Naive thymus-derived CD4-positive, alpha-beta T cell (primary cell): ENCODE measurements at regions of chr7 and their contacts with region 1.

Region 1: GRCh38 chr7:104983578-104984539 is 30.1 kb upstream of the KMT2E start:
- DNase-seq: peak; percentile 78 to 86 (median 84)
- ATAC-seq: peak; percentile 94
- H3K4me3 ChIP-seq: peak overlapping the region; percentile 93
- H3K4me3 Mint-ChIP-seq: peak overlapping the region; percentile 93 to 100 (median 99)
- H3K27ac ChIP-seq: peak overlapping the region; percentile 98
- H3K27ac Mint-ChIP-seq: peak overlapping the region; percentile 98 to 100 (median 100)
- H3K4me1 ChIP-seq: peaks cover 19 to 23% of the 10 kb centered on the region in 2 donors
- H3K4me1 Mint-ChIP-seq: peaks cover 27 to 67% (median 55%) of the 10 kb centered on the region in 7 donors
- H3K27me3 ChIP-seq: no peaks in the 10 kb centered on the region
- H3K27me3 Mint-ChIP-seq: no peaks in the 10 kb centered on the region

Region 2: DNA sequence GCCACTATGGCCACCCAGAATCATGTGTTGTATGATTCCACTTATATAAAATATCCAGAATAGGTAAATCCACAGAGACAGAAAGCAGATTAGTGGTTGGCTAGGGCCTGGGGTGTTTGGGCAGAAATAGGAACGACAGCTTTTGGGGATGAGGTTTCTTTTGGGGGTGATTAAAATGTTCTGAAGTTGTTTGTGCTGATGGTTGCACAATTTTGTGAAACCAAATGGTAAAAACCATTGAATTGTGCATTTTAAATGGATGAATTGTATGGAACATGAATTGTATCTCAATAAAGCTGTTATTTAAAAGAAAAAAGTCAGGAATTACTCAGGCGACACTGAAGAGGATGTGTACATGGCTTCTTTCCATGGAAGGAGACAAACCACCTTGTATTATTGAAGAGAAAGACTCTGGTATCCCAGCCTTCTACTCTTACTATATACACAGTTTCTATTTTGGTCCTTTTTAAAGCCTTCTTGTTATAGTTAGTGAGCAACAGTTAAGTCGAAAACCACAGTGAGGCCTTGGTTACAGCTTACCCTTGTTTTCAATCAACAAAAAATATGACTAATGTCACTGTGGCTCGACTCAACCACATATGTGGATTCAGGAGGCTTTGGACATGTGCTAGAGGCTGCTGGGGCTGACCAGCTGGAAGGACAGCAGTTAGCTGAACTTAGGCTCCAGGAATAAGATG is 27.0 kb before region 1 on chr7:
- CTCF ChIA-PET with region 1: interaction called, 3 read pairs
- POLR2A ChIA-PET with region 1: no interaction called
- intact Hi-C with region 1: loop called in 1 of 2 experiments (anchors 1 kb)
- DNase-seq: peak in 1 of 9 donors; percentile 61
- ATAC-seq: peak; percentile 80
- H3K4me3 ChIP-seq: no peak overlapping the region
- H3K4me3 Mint-ChIP-seq: peak overlapping the region in 1 of 10 donors; percentile 59
- H3K27ac ChIP-seq: no peak overlapping the region
- H3K27ac Mint-ChIP-seq: peak overlapping the region in 5 of 9 donors; percentile 38 to 99 (median 60)
- H3K4me1 ChIP-seq: peaks cover 0 to 19% of the 10 kb centered on the region in 2 donors
- H3K4me1 Mint-ChIP-seq: peaks cover 4 to 61% (median 6%) of the 10 kb centered on the region in 7 donors
- H3K27me3 ChIP-seq: no peaks in the 10 kb centered on the region
- H3K27me3 Mint-ChIP-seq: no peaks in the 10 kb centered on the region

Region 3: DNA sequence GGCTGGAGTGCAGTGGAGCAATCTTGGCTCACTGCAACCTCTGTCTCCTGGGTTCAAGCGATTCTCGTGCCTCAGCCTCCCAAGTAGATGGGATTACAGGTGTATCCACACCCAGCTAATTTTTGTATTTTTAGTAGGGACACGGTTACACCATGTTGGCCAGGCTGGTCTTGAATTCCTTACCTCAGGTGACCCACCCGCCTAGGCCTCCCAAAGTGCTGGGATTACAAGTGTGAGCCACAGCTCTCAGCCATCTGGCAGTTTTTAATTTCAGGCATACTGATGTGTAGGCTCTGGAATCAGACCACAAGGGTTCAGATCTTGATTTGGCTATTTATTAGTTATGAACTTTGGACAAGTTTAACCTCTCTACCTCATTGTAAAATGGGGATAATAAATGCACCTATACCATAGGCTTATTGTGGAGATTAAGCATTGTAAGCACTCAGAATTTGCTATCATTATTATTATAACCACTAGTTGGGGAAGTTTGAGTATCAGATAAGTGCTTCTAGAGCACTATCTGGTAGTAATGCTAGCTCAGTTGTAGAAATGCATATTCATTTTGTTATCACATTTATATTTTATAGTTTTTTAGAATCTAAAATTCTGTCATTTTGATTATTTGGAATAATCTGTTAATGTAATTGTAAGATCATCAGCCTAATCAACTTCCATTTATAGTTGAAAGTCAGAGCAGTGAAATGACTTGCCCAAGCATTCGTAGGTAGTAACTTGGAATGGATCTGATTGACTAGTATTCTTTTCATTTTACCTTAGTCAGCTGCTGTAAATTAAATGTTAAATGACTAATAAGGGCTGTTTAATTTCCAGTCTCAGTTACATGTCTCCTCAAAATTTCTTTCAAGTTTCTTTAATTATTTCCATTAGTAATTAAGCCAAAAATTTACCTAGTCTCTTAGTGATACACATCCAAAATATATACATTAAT is 52.6 kb after region 1 on chr7:
- CTCF ChIA-PET with region 1: interaction called, 76 read pairs
- POLR2A ChIA-PET with region 1: interaction called, 13 read pairs
- intact Hi-C with region 1: loop called (anchors 1 kb)
- DNase-seq: no peak
- ATAC-seq: peak; percentile 19
- H3K4me3 ChIP-seq: no peak overlapping the region
- H3K4me3 Mint-ChIP-seq: peak overlapping the region in 8 of 10 donors; percentile 6 to 74 (median 44)
- H3K27ac ChIP-seq: no peak overlapping the region
- H3K27ac Mint-ChIP-seq: peak overlapping the region in 7 of 9 donors; percentile 18 to 70 (median 41)
- H3K4me1 ChIP-seq: peaks cover 31 to 35% of the 10 kb centered on the region in 2 donors
- H3K4me1 Mint-ChIP-seq: peaks cover 29 to 77% (median 63%) of the 10 kb centered on the region in 7 donors
- H3K27me3 ChIP-seq: no peaks in the 10 kb centered on the region
- H3K27me3 Mint-ChIP-seq: no peaks in the 10 kb centered on the region

Region 4: GRCh38 chr7:105105579-105105978 is 121.7 kb after region 1 on chr7:
- CTCF ChIA-PET with region 1: interaction called, 3 read pairs
- POLR2A ChIA-PET with region 1: interaction called, 3 read pairs
- intact Hi-C with region 1: loop called in 1 of 2 experiments (anchors 1 kb)
- DNase-seq: no peak
- ATAC-seq: no peak
- H3K4me3 ChIP-seq: no peak overlapping the region
- H3K4me3 Mint-ChIP-seq: no peak overlapping the region
- H3K27ac ChIP-seq: no peak overlapping the region
- H3K27ac Mint-ChIP-seq: peak overlapping the region in 4 of 9 donors; percentile 32 to 64 (median 44)
- H3K4me1 ChIP-seq: no peaks in the 10 kb centered on the region
- H3K4me1 Mint-ChIP-seq: peaks cover 0 to 23% (median 15%) of the 10 kb centered on the region in 7 donors
- H3K27me3 ChIP-seq: no peaks in the 10 kb centered on the region
- H3K27me3 Mint-ChIP-seq: no peaks in the 10 kb centered on the region

Region 5: GRCh38 chr7:105352018-105352612 is 368.3 kb after region 1 on chr7:
- CTCF ChIA-PET with region 1: no interaction called
- POLR2A ChIA-PET with region 1: interaction called, 3 read pairs
- intact Hi-C with region 1: loop called in 1 of 2 experiments (anchors 1 kb)
- DNase-seq: peak; percentile 22 to 88 (median 82)
- ATAC-seq: peak; percentile 99
- H3K4me3 ChIP-seq: peak overlapping the region; percentile 44
- H3K4me3 Mint-ChIP-seq: peak overlapping the region; percentile 74 to 89 (median 81)
- H3K27ac ChIP-seq: peak overlapping the region; percentile 48
- H3K27ac Mint-ChIP-seq: peak overlapping the region; percentile 73 to 98 (median 92)
- H3K4me1 ChIP-seq: peaks cover 62 to 67% of the 10 kb centered on the region in 2 donors
- H3K4me1 Mint-ChIP-seq: peaks cover 45 to 82% (median 66%) of the 10 kb centered on the region in 7 donors
- H3K27me3 ChIP-seq: no peaks in the 10 kb centered on the region
- H3K27me3 Mint-ChIP-seq: no peaks in the 10 kb centered on the region

Region 6: DNA sequence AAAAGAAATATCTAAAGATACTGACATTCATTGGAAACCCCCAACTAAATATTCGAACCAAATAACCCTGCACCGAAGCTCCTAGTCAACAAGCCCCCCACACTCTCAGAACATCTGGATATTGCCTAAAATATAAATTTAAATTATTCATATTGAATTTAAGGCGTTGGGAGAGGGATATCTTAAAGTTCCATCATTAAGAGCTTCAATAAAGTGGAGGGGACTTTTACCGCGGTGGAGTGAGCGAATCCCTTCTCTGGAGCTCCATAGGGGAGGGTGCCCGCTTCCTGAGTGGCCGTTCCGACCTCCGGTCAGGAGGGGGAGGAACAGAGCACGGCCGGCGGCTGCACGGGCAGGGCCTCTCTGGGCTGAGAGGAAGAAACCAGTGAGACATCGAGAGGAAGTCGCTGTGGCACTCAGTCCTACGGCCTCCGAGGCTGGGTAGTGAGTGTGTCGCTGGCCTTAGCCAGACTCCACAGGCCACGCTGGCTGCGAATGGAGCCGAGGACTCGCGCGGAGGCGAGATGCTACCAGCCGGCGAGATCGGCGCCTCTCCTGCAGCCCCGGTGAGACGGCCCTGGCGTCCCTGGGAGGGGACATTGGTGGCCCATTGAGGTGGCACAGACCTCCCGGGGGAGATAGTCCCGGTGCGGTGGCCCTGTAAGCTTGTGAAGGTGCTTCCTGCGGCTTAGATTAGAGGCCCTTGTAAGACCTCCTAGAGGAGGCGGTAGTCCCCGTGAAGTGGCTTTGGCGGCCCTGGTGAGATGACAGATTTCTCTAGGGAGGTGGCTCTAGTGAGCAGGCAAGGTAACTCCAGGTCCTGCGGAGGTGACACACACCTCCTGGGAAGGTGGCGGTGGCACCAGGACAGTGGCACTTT is 548.2 kb after region 1 on chr7 and contains the start of gene RINT1:
- CTCF ChIA-PET with region 1: no interaction called
- POLR2A ChIA-PET with region 1: interaction called, 7 read pairs
- intact Hi-C with region 1: loop called (anchors 1 to 5 kb)
- DNase-seq: peak; percentile 72 to 90 (median 81)
- ATAC-seq: peak; percentile 97
- H3K4me3 ChIP-seq: peak within 1 kb of the TSS; percentile 86
- H3K4me3 Mint-ChIP-seq: peak within 1 kb of the TSS; percentile 87 to 99 (median 93)
- H3K27ac ChIP-seq: peak within 1 kb of the TSS; percentile 83
- H3K27ac Mint-ChIP-seq: peak within 1 kb of the TSS; percentile 87 to 98 (median 92)
- H3K4me1 ChIP-seq: peaks cover 13 to 18% of the 10 kb centered on the region in 2 donors
- H3K4me1 Mint-ChIP-seq: peaks cover 21 to 59% (median 38%) of the 10 kb centered on the region in 7 donors
- H3K27me3 ChIP-seq: no peaks in the 10 kb centered on the region
- H3K27me3 Mint-ChIP-seq: no peaks in the 10 kb centered on the region
- total RNA-seq, gene RINT1: 23.0 to 31.8 (median 26.0) TPM